ENCODE measurements at regions of chr22 and their contacts with region 1.

Region 1: GRCh38 chr22:17346578-17346977 is 22.7 kb upstream of the CECR2 start:
- DNase-seq: no peak
- ATAC-seq: no peak
- H3K4me3 Mint-ChIP-seq: no peak overlapping the region
- H3K27ac Mint-ChIP-seq: no peak overlapping the region
- H3K4me1 Mint-ChIP-seq: peaks cover 11% of the 10 kb centered on the region
- H3K27me3 Mint-ChIP-seq: no peaks in the 10 kb centered on the region
- CTCF ChIP-seq: no peak

Region 2: DNA sequence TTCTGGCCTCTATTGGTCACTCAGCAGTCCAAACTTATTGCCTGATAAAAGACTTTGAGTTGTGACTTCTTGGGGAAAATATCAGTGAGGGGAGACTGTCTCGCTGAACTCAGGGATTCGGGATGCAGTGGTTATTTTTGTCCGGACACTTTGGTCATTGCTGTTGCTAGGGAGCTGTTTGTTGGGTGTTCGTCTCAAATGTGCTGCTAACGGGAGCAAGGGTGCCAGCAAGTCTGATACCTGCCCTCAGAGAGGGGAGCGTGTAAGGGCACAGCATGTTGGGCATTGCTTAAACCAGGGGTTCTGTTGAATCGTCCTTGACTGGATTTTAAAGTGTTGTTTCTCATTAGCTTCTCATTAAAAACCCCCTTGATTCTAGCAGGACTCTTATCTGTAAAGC is 167.5 kb after region 1 on chr22:
- CTCF ChIA-PET with region 1: no interaction called
- POLR2A ChIA-PET with region 1: interaction called, 11 read pairs
- DNase-seq: no peak
- ATAC-seq: no peak
- H3K4me3 Mint-ChIP-seq: no peak overlapping the region
- H3K27ac Mint-ChIP-seq: peak overlapping the region; percentile 9
- H3K4me1 Mint-ChIP-seq: no peaks in the 10 kb centered on the region
- H3K27me3 Mint-ChIP-seq: no peaks in the 10 kb centered on the region
- CTCF ChIP-seq: no peak